Activated CD4-positive, alpha-beta memory T cell treated with anti-CD3 and anti-CD28 coated beads for 36 hours (primary cell): ENCODE measurements at regions of chr10 and their contacts with region 1.

Region 1: DNA sequence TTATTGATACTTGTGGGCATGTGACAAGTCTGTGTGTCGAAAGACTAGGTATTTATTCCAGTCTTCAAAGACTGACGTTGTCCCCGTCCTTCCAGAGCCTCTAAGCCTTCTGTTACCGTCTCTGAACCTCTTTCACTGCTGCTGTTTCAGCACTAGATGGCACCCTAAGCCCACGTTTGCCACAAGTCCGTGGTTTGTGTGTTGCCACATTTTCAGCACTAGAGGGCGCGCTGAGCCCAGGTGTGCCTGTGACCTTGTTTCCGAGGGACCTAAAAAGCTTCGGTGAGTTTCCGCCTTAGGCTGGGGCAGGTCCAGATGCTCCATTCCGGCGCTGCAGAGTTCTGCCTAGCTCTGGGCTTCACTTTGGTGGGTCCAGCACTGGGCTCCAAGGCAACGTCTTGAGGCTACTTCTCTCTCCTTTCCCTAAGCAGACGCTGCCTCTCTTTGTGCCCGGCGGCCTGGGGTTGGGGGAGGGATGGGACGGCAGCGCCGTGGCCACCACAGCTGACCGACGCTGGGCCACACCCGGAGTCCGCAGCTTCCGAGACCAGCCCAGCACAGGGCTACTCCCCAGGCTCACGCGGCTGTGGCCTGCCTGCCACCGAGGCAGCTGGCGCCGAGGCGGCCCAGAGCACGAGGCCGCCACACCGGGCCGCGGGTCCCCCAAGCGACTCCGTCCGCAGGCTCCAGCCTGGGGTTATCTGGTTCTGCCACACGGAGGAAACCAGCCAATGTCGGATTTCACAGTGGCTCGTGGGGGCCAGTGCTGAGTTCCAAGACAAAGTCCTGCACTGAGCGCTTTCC is 520.2 kb downstream of the REEP3 start:
- DNase-seq: peak; percentile 89
- H3K4me3 Mint-ChIP-seq: peak overlapping the region; percentile 46
- H3K27ac Mint-ChIP-seq: no peak overlapping the region
- H3K4me1 Mint-ChIP-seq: peaks cover 4% of the 10 kb centered on the region
- H3K27me3 Mint-ChIP-seq: peaks cover 8% of the 10 kb centered on the region

Region 2: DNA sequence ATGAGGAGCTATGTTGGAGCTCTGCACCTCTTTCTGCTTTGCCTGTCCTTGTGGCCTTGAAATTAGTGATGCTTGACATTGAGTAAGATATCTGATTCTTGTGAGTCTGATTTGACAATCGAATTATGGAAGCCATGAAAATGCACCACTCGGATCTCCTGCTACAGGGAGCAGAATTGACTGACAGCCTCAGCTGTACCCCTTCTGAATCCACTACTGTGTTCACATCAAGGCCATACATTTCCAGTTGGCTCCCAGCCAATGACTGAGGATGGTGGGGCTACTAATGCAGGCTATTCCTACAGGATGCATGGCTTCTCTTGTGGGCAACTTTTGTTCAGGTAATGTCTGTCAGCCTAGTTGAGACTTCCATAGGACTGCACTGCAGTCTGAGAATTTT is 198.3 kb before region 1 on chr10:
- CTCF ChIA-PET with region 1: no interaction called
- POLR2A ChIA-PET with region 1: no interaction called
- intact Hi-C with region 1: no loop called
- DNase-seq: no peak
- H3K4me3 Mint-ChIP-seq: no peak overlapping the region
- H3K27ac Mint-ChIP-seq: no peak overlapping the region
- H3K4me1 Mint-ChIP-seq: no peaks in the 10 kb centered on the region
- H3K27me3 Mint-ChIP-seq: peaks cover 11% of the 10 kb centered on the region

Region 3: DNA sequence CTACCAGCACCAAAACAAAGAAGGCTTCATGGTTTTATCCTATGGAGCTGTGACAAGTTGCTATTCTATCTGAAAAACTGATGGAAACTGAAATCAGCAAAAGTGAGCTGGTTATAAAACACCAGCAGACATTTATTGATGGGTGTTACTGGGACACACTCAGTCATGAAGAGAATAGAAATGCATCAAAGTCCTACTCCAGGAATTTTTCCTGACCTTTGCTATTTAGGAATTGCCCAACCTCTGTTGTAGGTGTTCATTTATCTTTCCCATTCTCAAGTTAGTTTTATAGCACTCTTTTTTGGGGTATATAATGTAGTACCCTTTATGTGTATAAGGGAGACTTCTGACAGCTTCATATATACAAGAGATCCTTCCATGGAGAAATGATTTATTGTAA is 13.0 kb after region 1 on chr10:
- CTCF ChIA-PET with region 1: interaction called, 16 read pairs
- POLR2A ChIA-PET with region 1: no interaction called
- intact Hi-C with region 1: no loop called
- DNase-seq: no peak
- H3K4me3 Mint-ChIP-seq: no peak overlapping the region
- H3K27ac Mint-ChIP-seq: no peak overlapping the region
- H3K4me1 Mint-ChIP-seq: no peaks in the 10 kb centered on the region
- H3K27me3 Mint-ChIP-seq: no peaks in the 10 kb centered on the region

Region 4: DNA sequence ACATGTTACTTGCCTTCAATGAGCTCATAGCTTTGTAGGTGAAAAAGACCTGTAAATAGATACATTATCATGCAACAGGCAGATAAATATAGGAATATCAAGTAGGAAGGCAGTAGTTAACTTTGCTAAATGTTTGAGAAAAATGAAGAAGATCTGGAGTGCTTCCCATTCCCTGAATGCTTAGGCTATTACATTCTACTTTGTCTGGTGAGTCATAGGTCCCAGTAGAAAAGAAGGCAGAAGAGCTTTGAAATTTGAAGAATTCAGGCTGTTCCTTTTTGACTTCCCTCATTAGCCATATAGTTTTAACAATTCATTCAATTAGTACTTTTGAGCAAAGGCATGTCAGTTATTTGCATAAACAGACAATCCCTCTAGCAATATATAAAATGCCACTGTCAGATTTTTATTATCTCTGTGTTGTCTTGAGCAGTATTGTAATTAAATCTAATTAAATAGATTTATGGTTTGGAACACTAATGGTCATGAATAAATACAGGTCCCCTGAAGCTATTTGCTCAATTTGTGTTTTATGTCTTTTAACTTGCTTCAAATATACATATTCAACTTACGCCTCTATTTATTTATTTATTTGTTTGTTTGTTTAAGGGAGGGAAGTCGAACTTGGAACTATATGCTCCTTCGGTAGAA is 354.8 kb after region 1 on chr10:
- CTCF ChIA-PET with region 1: no interaction called
- POLR2A ChIA-PET with region 1: no interaction called
- intact Hi-C with region 1: loop called (anchors 10 kb)
- DNase-seq: no peak
- H3K4me3 Mint-ChIP-seq: no peak overlapping the region
- H3K27ac Mint-ChIP-seq: no peak overlapping the region
- H3K4me1 Mint-ChIP-seq: no peaks in the 10 kb centered on the region
- H3K27me3 Mint-ChIP-seq: no peaks in the 10 kb centered on the region